ENCODE measurements at regions of chr11 and their contacts with region 1.

Region 1: GRCh38 chr11:9015677-9016076 is 11.9 kb upstream of the NRIP3 start:
- DNase-seq: peak; percentile 82

Region 2: GRCh38 chr11:9003573-9004309 is 11.9 kb before region 1 on chr11 and contains the start of gene NRIP3:
- CTCF ChIA-PET with region 1: interaction called, 17 read pairs
- POLR2A ChIA-PET with region 1: interaction called, 3 read pairs
- DNase-seq: peak; percentile 86

Region 3: DNA sequence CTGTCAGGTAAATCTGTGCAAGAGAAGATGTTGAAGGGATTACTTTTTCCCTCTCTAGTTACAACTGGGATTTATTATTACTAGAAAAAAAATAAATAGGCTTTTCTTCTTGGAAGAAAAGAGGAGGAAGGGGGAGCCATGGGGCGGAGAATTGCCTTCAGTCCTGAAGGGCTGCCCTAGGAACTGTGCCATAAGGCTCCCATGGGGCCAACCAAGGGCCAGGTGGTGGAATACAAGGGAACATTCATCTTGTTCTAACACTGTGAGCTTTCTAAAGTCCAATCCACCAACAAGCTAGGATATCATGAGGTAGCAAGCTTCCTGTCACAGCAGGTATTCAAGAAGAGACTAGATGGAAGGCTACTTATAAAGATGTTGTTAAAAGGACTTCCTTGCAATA is 12.9 kb after region 1 on chr11:
- CTCF ChIA-PET with region 1: interaction called, 11 read pairs
- POLR2A ChIA-PET with region 1: no interaction called
- DNase-seq: no peak

Region 4: GRCh38 chr11:9047964-9048523 is 32.4 kb after region 1 on chr11:
- CTCF ChIA-PET with region 1: interaction called, 10 read pairs
- POLR2A ChIA-PET with region 1: no interaction called
- DNase-seq: no peak

Region 5: DNA sequence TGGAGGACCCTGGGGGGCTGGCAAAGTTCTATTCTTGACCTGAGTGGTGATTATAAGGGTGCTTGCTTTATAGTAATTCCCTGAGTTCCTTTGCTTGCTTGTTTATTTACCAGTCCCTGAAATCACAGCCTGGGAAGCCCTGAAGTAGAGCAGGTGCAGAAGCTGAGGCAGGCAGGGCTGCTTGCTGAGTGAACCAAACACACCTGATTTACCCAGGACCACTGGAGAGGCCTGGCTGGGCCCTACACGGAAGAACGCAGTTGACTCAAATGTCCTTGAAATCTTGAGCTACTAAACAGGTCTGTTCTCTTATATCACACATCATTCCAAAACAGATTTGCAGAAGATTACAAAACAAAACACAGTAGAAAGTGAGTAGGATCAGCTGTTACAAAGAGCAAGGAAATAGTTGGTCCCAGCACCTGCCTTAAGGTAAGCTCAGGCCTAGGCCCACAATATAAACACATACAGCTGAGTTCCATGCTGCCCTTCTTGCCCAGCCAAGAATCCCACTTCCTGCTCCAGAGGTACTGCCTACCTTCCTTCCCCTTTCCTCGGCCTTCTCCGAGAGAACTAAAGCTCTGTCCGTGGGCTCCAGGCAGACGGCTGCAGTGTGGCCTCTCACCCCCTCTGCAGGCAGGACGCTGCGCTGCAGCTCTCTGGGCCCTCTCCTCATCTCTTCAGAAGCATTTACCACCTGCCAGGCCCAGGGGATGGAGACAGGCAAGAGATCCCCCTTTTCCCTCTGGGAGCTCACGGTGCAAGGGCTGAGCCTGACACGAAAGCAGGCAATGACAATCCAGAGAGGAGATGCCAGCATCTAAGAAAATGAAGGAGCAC is 121.8 kb after region 1 on chr11:
- CTCF ChIA-PET with region 1: interaction called, 25 read pairs
- POLR2A ChIA-PET with region 1: no interaction called
- DNase-seq: peak; percentile 85

Region 6: GRCh38 chr11:9170450-9170849 is 154.8 kb after region 1 on chr11:
- CTCF ChIA-PET with region 1: no interaction called
- POLR2A ChIA-PET with region 1: no interaction called
- DNase-seq: no peak